ENCODE measurements at regions of chr4 and their contacts with region 1.

Region 1: DNA sequence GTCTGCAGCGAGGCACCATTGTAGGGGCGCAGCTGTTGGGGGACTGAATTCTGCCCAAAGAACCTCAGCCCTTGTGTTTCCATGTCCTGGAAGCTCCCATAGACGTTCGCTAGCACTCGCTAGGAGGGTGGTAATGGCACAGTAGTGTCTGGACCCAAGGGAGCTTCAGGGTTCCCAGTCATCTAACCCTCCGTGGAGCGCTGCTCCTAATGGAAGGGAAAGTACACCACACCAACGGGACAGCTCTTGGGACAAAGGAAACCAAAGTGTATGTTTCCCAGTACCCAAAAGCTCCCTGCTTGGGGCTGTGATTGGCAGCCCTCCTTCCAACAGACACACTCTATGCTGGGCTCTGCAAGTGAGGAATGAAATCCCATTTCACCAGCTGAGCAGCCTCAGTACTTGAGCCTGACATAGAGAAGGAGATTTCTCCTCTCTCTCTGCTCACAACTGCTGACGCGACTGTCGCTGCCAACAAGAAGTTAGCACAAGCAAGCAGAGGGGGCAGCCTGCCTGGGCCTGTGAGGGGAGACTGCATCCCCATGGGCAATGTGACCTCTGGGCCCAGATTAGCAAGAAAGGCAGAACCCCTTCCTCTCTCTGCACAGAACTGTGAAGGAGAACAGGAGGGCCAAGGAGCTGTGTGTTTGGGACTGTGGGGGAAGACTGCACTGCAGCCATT is 67.6 kb upstream of the SMARCAD1 start:
- DNase-seq: no peak
- ATAC-seq: no peak
- H3K4me3 ChIP-seq: no peak overlapping the region
- H3K4me1 ChIP-seq: no peaks in the 10 kb centered on the region
- CTCF ChIP-seq: no peak

Region 2: GRCh38 chr4:93342738-93343137 is 797.3 kb before region 1 on chr4:
- intact Hi-C with region 1: loop called in 1 of 2 experiments (anchors 10 kb)
- DNase-seq: no peak
- ATAC-seq: no peak
- H3K4me3 ChIP-seq: no peak overlapping the region
- H3K4me1 ChIP-seq: no peaks in the 10 kb centered on the region
- CTCF ChIP-seq: no peak